ENCODE measurements at regions of chr14 and their contacts with region 1.

Region 1: DNA sequence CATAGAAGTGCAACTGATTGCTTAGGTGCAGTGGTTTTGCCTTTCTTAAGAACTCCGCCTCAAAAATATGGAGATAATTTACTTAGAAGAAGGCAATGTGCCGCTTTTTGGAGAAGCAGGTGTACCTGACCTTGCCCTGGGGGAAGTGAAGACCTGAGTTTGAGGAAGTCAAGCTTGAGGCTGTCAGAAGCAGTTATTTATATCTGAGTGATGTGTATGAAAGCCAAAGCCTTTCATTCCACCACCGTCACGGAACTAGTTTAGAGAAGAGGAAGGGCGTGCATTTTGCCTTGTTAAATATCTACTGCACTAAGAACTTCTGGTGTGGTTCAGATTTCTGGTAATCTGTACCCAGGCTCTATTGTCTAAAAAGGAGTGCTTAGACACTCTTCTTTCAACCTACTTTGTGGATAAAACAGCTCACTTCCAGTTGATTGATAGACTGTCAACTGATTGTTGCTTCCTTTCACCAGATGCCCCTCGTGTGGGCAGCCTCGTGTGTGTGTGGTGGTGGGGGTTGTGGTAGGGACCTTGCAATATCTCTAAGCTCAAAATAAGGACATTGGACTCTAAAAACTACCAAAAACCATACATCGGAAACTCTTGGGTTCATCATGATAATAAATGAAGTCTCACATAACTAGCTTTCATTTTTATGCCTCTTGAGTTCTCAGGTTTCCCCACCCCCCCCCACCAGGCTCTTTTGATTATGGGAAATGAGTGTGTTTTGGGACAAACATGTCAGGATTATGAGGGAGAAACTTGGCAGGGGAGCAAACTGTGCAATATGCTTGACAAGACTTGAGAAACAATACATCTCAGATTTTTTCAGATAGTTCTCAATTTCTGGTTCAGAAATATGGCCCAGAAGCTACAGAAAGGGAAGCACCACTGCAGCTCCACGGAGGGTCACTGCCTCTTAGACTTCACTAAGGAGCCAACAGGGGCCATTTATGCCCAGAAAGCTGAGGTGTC is 78.6 kb downstream of the ARF6 start:
- DNase-seq: peak; percentile 65
- H3K4me3 ChIP-seq: no peak overlapping the region
- H3K27ac ChIP-seq: peak overlapping the region; percentile 94
- H3K4me1 ChIP-seq: peaks cover 17% of the 10 kb centered on the region
- H3K27me3 ChIP-seq: no peaks in the 10 kb centered on the region
- CTCF ChIP-seq: no peak

Region 2: DNA sequence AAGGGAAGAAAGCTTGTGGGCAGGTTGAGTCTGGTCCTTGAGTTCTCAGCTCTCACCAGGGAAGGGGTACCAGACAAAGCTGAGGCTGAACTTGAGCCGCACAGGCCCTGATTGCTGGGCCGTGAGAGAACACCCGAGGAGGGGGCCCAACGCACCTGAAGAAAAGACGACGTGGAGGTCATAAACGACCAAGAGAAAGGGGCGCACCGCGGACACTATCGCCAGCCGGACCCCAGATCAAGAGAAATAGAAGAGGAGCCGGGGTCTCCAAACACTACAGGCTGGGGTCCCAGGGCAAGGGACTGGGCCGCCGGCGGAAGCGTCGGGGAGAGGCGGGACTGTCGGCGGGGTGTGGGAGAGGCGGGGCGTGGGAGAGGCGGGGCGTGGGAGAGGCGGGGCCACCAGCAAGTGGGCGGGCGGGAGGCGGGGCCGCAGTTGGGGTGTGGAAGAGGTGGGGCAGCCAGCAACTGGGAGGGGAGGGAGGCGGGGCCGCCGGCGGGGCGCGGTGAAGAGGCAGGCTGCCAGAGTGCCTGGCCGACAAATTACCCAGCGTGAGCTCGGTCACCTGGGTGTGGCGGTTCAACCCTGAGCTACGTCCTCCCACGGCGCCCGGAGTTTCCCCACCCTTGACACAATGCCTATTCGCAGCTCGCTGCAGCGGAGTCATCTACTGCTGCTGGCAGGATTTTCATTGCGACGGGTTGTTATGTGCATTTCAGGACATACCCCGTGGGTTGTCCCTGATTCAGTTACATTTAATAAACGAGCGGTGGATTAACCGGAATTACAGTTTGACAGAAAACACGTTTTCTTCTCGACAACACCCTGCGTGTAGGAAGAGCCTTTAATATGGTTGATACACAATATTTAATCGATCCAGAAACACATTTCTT is 103.4 kb before region 1 on chr14:
- intact Hi-C with region 1: loop called (anchors 10 kb)
- DNase-seq: peak; percentile 99
- H3K4me3 ChIP-seq: peak overlapping the region; percentile 40
- H3K27ac ChIP-seq: peak overlapping the region; percentile 77
- H3K4me1 ChIP-seq: peaks cover 4% of the 10 kb centered on the region
- H3K27me3 ChIP-seq: no peaks in the 10 kb centered on the region
- CTCF ChIP-seq: no peak

Measured in colonic mucosa (tissue), 4 donors.